Activated CD8-positive, alpha-beta T cell treated with anti-CD3 and anti-CD28 coated beads, Interleukin-2, amount 10 ng/mL, durations not matched to agents 7 days and 5 days (primary cell): ENCODE measurements at regions of chr17 and their contacts with region 1.

Region 1: GRCh38 chr17:48351831-48352332 is 78.1 kb downstream of the SKAP1 start:
- DNase-seq: no peak
- ATAC-seq: no peak
- H3K4me3 Mint-ChIP-seq: peak overlapping the region; percentile 10
- H3K27ac Mint-ChIP-seq: no peak overlapping the region
- H3K4me1 Mint-ChIP-seq: peaks cover 14% of the 10 kb centered on the region
- H3K27me3 Mint-ChIP-seq: no peaks in the 10 kb centered on the region

Region 2: GRCh38 chr17:48363161-48363560 is 11.3 kb after region 1 on chr17:
- CTCF ChIA-PET with region 1: interaction called, 35 read pairs
- POLR2A ChIA-PET with region 1: no interaction called
- DNase-seq: no peak
- ATAC-seq: no peak
- H3K4me3 Mint-ChIP-seq: no peak overlapping the region
- H3K27ac Mint-ChIP-seq: no peak overlapping the region
- H3K4me1 Mint-ChIP-seq: peaks cover 9% of the 10 kb centered on the region
- H3K27me3 Mint-ChIP-seq: no peaks in the 10 kb centered on the region

Region 3: GRCh38 chr17:48413613-48414405 is 61.9 kb after region 1 on chr17:
- CTCF ChIA-PET with region 1: interaction called, 12 read pairs
- POLR2A ChIA-PET with region 1: no interaction called
- DNase-seq: no peak
- ATAC-seq: peak; percentile 57
- H3K4me3 Mint-ChIP-seq: no peak overlapping the region
- H3K27ac Mint-ChIP-seq: peak overlapping the region; percentile 75
- H3K4me1 Mint-ChIP-seq: peaks cover 71% of the 10 kb centered on the region
- H3K27me3 Mint-ChIP-seq: no peaks in the 10 kb centered on the region

Region 4: GRCh38 chr17:48457080-48457836 is 105.4 kb after region 1 on chr17:
- CTCF ChIA-PET with region 1: interaction called, 92 read pairs
- POLR2A ChIA-PET with region 1: no interaction called
- DNase-seq: peak; percentile 85
- ATAC-seq: peak; percentile 74
- H3K4me3 Mint-ChIP-seq: peak overlapping the region; percentile 72
- H3K27ac Mint-ChIP-seq: peak overlapping the region; percentile 60
- H3K4me1 Mint-ChIP-seq: peaks cover 65% of the 10 kb centered on the region
- H3K27me3 Mint-ChIP-seq: peaks cover 4% of the 10 kb centered on the region

Region 5: DNA sequence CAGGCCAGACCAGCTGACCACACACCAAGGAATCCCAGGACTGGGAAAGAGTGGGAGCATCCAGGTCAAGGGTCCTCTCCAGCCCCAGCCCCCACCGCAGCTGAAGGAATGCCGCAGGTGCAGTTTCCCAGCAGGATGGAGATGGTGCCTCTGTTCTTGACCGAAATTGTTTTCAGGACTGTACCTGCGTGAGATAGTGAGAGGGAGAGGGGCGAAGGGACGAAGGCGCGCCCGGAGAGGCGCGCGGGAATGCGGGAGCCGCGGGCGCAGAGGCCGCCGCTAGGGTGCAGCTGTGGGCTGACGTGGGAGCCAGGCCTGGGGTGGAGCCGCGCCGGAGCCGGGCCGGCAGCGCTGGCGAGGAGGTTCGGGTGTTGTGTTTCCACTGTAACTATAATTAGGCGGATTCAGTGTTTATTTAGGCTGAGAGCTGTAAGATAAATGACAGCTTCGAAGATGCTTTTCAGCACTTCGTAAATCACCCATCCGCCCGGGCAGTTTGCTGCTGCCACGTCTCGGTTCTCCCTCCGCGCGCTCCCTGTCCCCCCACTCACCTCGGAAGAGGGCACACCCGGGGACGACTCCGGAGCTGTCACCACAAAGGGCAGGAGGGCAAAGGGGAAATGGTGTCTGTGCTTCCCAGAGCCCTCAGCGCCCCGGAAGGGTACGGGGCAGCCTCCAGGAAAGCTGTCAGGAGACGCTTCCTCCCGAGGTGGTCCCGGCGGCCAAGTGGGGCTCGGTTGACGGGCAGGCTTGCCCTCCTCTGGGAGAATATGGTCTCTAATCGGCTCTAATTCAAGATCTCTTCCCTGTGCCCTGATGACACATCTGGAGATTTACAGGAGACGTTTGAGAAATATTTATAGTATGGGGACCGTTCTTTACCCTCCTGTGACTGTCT is 140.8 kb after region 1 on chr17:
- CTCF ChIA-PET with region 1: interaction called, 17 read pairs
- POLR2A ChIA-PET with region 1: interaction called, 3 read pairs
- DNase-seq: peak; percentile 75
- ATAC-seq: peak; percentile 96
- H3K4me3 Mint-ChIP-seq: peak overlapping the region; percentile 65
- H3K27ac Mint-ChIP-seq: no peak overlapping the region
- H3K4me1 Mint-ChIP-seq: peaks cover 39% of the 10 kb centered on the region
- H3K27me3 Mint-ChIP-seq: peaks cover 23% of the 10 kb centered on the region